ENCODE measurements at regions of chr10 and their contacts with region 1.

Region 1: GRCh38 chr10:119535837-119536507 is 6.5 kb downstream of the RGS10 start:
- DNase-seq: peak in 1 of 5 donors; percentile 30
- H3K4me3 ChIP-seq: peak overlapping the region; percentile 28
- H3K4me3 Mint-ChIP-seq: peak overlapping the region in 5 of 7 donors; percentile 10 to 36 (median 27)
- H3K27ac ChIP-seq: no peak overlapping the region
- H3K27ac Mint-ChIP-seq: peak overlapping the region in 7 of 8 donors; percentile 7 to 75 (median 40)
- H3K4me1 ChIP-seq: peaks cover 84% of the 10 kb centered on the region
- H3K4me1 Mint-ChIP-seq: peaks cover 71 to 84% (median 81%) of the 10 kb centered on the region in 3 donors
- H3K27me3 ChIP-seq: no peaks in the 10 kb centered on the region
- H3K27me3 Mint-ChIP-seq: no peaks in the 10 kb centered on the region

Region 2: GRCh38 chr10:119517235-119518141 is 18.5 kb before region 1 on chr10:
- CTCF ChIA-PET with region 1: interaction called, 83 read pairs
- POLR2A ChIA-PET with region 1: interaction called, 24 read pairs
- DNase-seq: peak in 4 of 5 donors; percentile 18 to 69 (median 49)
- H3K4me3 ChIP-seq: peak overlapping the region; percentile 40
- H3K4me3 Mint-ChIP-seq: peak overlapping the region; percentile 62 to 89 (median 76)
- H3K27ac ChIP-seq: peak overlapping the region; percentile 58
- H3K27ac Mint-ChIP-seq: peak overlapping the region; percentile 90 to 98 (median 96)
- H3K4me1 ChIP-seq: peaks cover 60% of the 10 kb centered on the region
- H3K4me1 Mint-ChIP-seq: peaks cover 42 to 60% (median 55%) of the 10 kb centered on the region in 3 donors
- H3K27me3 ChIP-seq: no peaks in the 10 kb centered on the region
- H3K27me3 Mint-ChIP-seq: no peaks in the 10 kb centered on the region

Region 3: GRCh38 chr10:119616882-119617570 is 81.1 kb after region 1 on chr10:
- CTCF ChIA-PET with region 1: no interaction called
- POLR2A ChIA-PET with region 1: no interaction called
- DNase-seq: no peak
- H3K4me3 ChIP-seq: no peak overlapping the region
- H3K4me3 Mint-ChIP-seq: no peak overlapping the region
- H3K27ac ChIP-seq: no peak overlapping the region
- H3K27ac Mint-ChIP-seq: no peak overlapping the region
- H3K4me1 ChIP-seq: no peaks in the 10 kb centered on the region
- H3K4me1 Mint-ChIP-seq: no peaks in the 10 kb centered on the region
- H3K27me3 ChIP-seq: no peaks in the 10 kb centered on the region
- H3K27me3 Mint-ChIP-seq: peaks cover 2 to 17% of the 10 kb centered on the region in 2 donors